Caco-2 (cell line): ENCODE measurements at regions of chr2 and their contacts with region 1.

Region 1: DNA sequence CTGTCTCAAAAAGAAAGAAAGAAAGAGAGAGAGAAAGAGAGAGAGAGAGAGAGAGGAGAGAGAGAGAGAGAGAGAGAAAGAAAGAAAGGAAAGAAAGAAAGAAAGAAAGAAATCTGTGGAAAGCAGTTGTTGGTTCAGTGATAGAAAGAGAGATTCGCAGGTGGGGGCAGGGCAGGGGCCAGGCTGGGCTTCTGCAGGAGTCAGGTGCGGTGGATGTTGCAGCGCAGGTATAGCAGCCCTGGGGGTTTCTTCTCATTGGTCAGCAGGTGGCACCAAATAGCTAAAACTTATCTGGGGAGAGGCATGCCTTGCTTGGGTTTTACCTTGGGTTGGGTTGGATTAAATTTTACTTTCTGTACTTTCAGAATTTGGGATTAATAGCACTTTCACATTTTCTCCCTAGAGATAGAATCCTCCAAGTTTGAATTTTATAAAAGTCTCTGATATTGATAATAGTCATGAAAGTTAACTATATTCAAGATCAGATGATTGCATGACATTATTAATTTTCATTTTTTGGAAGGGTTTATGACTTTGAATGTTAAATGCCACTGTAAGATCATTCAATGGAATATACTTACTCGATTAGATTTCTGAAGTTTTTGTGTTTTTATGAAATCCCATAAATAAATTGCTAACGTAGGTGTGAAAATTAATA is 66.6 kb downstream of the SPTBN1 start:
- DNase-seq: peak; percentile 83 to 87
- H3K4me3 ChIP-seq: no peak overlapping the region
- H3K4me3 Mint-ChIP-seq: no peak overlapping the region
- H3K27ac Mint-ChIP-seq: no peak overlapping the region
- H3K4me1 ChIP-seq: peaks cover 20% of the 10 kb centered on the region
- H3K4me1 Mint-ChIP-seq: peaks cover 42% of the 10 kb centered on the region
- H3K27me3 ChIP-seq: no peaks in the 10 kb centered on the region
- H3K27me3 Mint-ChIP-seq: no peaks in the 10 kb centered on the region
- CTCF ChIP-seq: peak; percentile 72 to 83

Region 2: GRCh38 chr2:54176577-54176976 is 346.2 kb before region 1 on chr2:
- CTCF ChIA-PET with region 1: no interaction called
- POLR2A ChIA-PET with region 1: no interaction called
- intact Hi-C with region 1: loop called (anchors 1 kb)
- DNase-seq: peak; percentile 52 to 72
- H3K4me3 ChIP-seq: no peak overlapping the region
- H3K4me3 Mint-ChIP-seq: no peak overlapping the region
- H3K27ac Mint-ChIP-seq: no peak overlapping the region
- H3K4me1 ChIP-seq: no peaks in the 10 kb centered on the region
- H3K4me1 Mint-ChIP-seq: no peaks in the 10 kb centered on the region
- H3K27me3 ChIP-seq: no peaks in the 10 kb centered on the region
- H3K27me3 Mint-ChIP-seq: no peaks in the 10 kb centered on the region
- CTCF ChIP-seq: peak; percentile 55 to 61

Region 3: GRCh38 chr2:54624591-54625071 is 101.9 kb after region 1 on chr2:
- CTCF ChIA-PET with region 1: no interaction called
- POLR2A ChIA-PET with region 1: no interaction called
- intact Hi-C with region 1: loop called (anchors 2 kb)
- DNase-seq: no peak
- H3K4me3 ChIP-seq: no peak overlapping the region
- H3K4me3 Mint-ChIP-seq: no peak overlapping the region
- H3K27ac Mint-ChIP-seq: no peak overlapping the region
- H3K4me1 ChIP-seq: peaks cover 4% of the 10 kb centered on the region
- H3K4me1 Mint-ChIP-seq: peaks cover 23% of the 10 kb centered on the region
- H3K27me3 ChIP-seq: no peaks in the 10 kb centered on the region
- H3K27me3 Mint-ChIP-seq: no peaks in the 10 kb centered on the region
- CTCF ChIP-seq: no peak

Region 4: DNA sequence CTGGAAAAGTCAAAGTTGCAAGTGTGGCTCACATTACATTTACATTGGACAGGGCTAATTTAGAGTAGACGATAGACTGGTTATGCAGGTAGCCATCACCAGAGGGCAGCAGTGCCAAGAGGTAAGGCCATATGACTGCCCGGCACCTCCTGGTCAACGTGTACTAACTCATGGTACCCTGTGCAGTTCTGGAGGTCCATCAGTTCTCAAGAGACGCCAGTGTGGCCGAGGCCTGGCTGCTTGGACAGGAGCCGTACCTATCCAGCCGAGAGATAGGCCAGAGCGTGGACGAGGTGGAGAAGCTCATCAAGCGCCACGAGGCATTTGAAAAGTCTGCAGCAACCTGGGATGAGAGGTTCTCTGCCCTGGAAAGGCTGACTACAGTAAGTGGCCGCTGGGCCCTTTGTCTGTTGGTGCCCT is 134.9 kb after region 1 on chr2:
- CTCF ChIA-PET with region 1: no interaction called
- POLR2A ChIA-PET with region 1: no interaction called
- intact Hi-C with region 1: loop called (anchors 1 kb)
- DNase-seq: peak; percentile 64 to 75
- H3K4me3 ChIP-seq: no peak overlapping the region
- H3K4me3 Mint-ChIP-seq: no peak overlapping the region
- H3K27ac Mint-ChIP-seq: peak overlapping the region; percentile 76
- H3K4me1 ChIP-seq: no peaks in the 10 kb centered on the region
- H3K4me1 Mint-ChIP-seq: peaks cover 8% of the 10 kb centered on the region
- H3K27me3 ChIP-seq: no peaks in the 10 kb centered on the region
- H3K27me3 Mint-ChIP-seq: no peaks in the 10 kb centered on the region
- CTCF ChIP-seq: peak; percentile 60 to 69

Region 5: DNA sequence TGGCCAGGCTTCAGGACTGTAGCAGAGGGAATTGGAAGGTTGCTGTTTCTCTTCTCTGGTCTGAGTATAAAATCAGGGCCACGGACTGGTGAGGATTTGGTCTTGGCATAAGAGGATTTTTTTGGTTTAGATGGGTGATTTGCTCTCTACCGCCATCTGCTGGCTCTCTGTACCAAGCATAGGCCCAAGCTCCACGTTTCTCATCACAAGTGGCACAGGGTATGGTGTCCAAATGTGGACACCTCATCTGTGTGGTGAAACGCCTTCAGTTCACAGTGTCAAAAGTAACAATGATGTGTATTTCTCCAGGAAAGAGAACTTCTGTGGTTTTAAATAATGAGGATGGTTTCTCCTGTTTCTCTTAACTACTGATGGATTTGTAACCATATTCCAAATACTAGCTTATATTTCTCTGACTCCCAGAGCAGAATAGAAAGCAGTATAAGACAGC is 315.9 kb after region 1 on chr2:
- CTCF ChIA-PET with region 1: interaction called, 3 read pairs
- POLR2A ChIA-PET with region 1: no interaction called
- intact Hi-C with region 1: loop called (anchors 2 kb)
- DNase-seq: peak; percentile 62 to 70
- H3K4me3 ChIP-seq: no peak overlapping the region
- H3K4me3 Mint-ChIP-seq: no peak overlapping the region
- H3K27ac Mint-ChIP-seq: no peak overlapping the region
- H3K4me1 ChIP-seq: no peaks in the 10 kb centered on the region
- H3K4me1 Mint-ChIP-seq: peaks cover 6% of the 10 kb centered on the region
- H3K27me3 ChIP-seq: no peaks in the 10 kb centered on the region
- H3K27me3 Mint-ChIP-seq: no peaks in the 10 kb centered on the region
- CTCF ChIP-seq: peak; percentile 91 to 94

Region 6: GRCh38 chr2:54927085-54927750 is 404.5 kb after region 1 on chr2:
- CTCF ChIA-PET with region 1: no interaction called
- POLR2A ChIA-PET with region 1: no interaction called
- intact Hi-C with region 1: no loop called
- DNase-seq: no peak
- H3K4me3 ChIP-seq: no peak overlapping the region
- H3K4me3 Mint-ChIP-seq: no peak overlapping the region
- H3K27ac Mint-ChIP-seq: no peak overlapping the region
- H3K4me1 ChIP-seq: no peaks in the 10 kb centered on the region
- H3K4me1 Mint-ChIP-seq: no peaks in the 10 kb centered on the region
- H3K27me3 ChIP-seq: no peaks in the 10 kb centered on the region
- H3K27me3 Mint-ChIP-seq: no peaks in the 10 kb centered on the region
- CTCF ChIP-seq: no peak